ENCODE measurements at regions of chr16 and their contacts with region 1.

Region 1: GRCh38 chr16:86931399-86931941 is 353.1 kb downstream of the FOXL1 start:
- DNase-seq: peak; percentile 98
- H3K4me3 ChIP-seq: no peak overlapping the region
- H3K27ac ChIP-seq: peak overlapping the region; percentile 91
- H3K4me1 ChIP-seq: peaks cover 49% of the 10 kb centered on the region
- H3K27me3 ChIP-seq: no peaks in the 10 kb centered on the region
- CTCF ChIP-seq: peak in 1 of 2 donors; percentile 32
- POLR2A ChIP-seq: peak; percentile 68

Region 2: DNA sequence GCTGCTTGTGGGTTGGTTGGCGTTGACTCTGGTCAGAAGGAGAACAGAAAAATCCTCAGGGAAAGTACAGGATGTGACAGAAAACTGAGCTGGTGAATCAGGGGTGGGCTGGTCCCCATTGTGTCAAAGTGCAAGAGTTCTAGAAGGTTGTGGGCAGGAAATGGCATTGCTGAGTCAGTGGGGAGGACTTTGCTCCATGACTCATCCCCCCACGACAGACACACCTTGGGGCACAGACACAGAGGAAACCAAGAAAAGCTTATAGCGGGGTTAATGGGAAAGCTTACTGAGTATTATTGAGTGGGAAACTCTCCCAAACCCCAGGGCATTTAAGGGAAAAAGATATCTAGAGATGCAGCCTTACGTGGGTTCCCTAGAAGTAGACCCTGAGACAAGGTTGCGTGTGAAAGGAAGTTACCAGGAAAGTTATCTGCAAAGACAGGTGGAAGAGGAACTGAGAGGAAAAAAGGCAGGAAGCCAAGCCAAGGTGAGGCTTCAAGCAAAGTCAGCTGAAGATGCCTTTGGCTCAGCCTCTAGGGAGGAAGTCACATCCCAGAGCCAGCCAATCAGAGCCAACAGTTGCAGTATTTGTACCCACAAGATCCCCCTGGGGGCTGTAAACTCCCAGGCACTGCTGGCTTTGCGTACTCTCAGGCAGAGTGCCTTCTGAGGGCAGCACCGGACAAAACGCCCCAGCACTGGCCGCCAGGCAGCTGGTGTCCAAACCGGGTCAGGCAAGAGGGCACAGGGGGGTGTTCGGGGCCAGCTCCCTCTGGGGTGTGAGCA is 266.7 kb before region 1 on chr16:
- CTCF ChIA-PET with region 1: no interaction called
- POLR2A ChIA-PET with region 1: interaction called, 3 read pairs
- dilution Hi-C with region 1: no loop called
- intact Hi-C with region 1: loop called (anchors 1 kb)
- DNase-seq: peak; percentile 94
- H3K4me3 ChIP-seq: no peak overlapping the region
- H3K27ac ChIP-seq: peak overlapping the region; percentile 95
- H3K4me1 ChIP-seq: peaks cover 60% of the 10 kb centered on the region
- H3K27me3 ChIP-seq: no peaks in the 10 kb centered on the region
- CTCF ChIP-seq: no peak
- POLR2A ChIP-seq: no peak

Region 3: DNA sequence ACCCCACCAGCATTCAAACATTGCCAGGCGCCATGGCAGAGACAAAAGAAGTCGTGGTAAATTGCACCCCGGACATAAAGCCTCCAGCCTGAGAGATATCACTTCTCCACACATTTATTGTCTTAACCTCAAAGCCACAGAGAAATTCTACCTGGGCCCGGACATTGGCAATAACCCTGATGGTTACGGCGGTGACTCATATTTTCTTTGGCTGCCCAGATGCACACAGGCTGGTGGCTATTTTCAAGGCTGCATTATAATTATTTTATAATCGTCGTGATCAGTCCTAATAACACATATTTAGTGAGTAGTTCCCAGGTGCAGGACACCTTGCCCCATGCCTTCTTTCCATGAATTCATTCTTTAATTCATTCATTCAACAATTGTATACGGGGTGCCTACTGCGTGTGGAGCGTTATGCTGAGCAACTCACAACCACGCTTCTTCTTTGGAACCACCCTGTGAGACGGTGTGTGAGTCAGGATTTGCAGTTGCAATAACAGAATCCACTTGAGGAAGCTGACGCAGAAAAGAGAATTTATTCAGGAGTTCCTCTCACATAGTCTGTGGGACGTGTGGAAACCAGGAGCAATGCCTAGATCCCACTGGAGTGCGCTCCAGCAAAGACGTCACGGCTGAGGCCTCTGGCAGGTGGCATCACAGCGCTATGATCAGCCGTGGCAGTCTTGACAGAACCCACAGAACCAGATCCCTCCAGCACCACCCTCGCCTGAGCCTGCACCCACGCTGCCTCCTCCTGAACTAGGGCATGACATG is 107.4 kb before region 1 on chr16:
- CTCF ChIA-PET with region 1: interaction called, 3 read pairs
- POLR2A ChIA-PET with region 1: no interaction called
- dilution Hi-C with region 1: no loop called
- intact Hi-C with region 1: loop called (anchors 1 kb)
- DNase-seq: peak; percentile 87
- H3K4me3 ChIP-seq: peak overlapping the region in 1 of 3 experiments; percentile 7
- H3K27ac ChIP-seq: peak overlapping the region; percentile 93
- H3K4me1 ChIP-seq: peaks cover 50% of the 10 kb centered on the region
- H3K27me3 ChIP-seq: no peaks in the 10 kb centered on the region
- CTCF ChIP-seq: no peak
- POLR2A ChIP-seq: peak; percentile 50

Region 4: DNA sequence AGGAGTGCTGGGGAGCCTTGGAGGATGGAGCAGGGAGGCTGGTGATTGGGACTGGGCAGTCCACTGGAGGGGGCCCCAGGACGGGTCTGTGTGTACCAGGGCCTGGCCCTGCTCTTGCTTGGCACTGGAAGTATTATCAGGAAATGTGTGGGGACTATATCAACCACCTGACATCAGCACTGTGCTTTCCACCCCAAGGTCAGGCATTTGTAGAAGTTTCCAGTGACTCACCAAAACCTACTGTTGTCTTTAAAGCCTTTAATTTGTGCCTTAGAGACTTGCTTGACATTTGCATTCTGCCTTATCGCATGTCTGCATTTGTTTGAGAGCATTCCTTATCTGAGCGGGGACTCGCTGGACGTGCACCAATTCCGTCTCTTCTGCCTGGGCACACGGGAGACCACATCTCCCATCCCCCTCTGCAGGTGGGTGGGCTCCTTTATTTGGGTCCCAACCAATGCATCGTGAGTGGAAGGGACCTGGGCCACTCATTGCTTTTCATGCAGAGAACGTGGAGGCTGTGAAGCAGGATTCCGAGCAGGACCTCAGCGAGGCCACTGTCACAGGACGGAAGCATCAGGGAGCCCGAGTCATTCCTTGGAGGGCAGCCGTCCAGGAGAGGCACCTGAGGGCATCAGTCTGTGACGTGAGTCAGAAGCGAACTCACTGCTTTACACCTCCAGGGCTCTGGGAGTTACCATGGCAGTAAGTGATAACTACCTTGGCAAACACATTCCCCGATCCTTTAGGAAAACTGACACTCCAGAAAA is 29.8 kb before region 1 on chr16:
- CTCF ChIA-PET with region 1: no interaction called
- POLR2A ChIA-PET with region 1: no interaction called
- dilution Hi-C with region 1: no loop called
- intact Hi-C with region 1: loop called (anchors 1 kb)
- DNase-seq: peak; percentile 94
- H3K4me3 ChIP-seq: no peak overlapping the region
- H3K27ac ChIP-seq: peak overlapping the region; percentile 53
- H3K4me1 ChIP-seq: peaks cover 24% of the 10 kb centered on the region
- H3K27me3 ChIP-seq: no peaks in the 10 kb centered on the region
- CTCF ChIP-seq: peak in 1 of 2 donors; percentile 49
- POLR2A ChIP-seq: no peak

Region 5: DNA sequence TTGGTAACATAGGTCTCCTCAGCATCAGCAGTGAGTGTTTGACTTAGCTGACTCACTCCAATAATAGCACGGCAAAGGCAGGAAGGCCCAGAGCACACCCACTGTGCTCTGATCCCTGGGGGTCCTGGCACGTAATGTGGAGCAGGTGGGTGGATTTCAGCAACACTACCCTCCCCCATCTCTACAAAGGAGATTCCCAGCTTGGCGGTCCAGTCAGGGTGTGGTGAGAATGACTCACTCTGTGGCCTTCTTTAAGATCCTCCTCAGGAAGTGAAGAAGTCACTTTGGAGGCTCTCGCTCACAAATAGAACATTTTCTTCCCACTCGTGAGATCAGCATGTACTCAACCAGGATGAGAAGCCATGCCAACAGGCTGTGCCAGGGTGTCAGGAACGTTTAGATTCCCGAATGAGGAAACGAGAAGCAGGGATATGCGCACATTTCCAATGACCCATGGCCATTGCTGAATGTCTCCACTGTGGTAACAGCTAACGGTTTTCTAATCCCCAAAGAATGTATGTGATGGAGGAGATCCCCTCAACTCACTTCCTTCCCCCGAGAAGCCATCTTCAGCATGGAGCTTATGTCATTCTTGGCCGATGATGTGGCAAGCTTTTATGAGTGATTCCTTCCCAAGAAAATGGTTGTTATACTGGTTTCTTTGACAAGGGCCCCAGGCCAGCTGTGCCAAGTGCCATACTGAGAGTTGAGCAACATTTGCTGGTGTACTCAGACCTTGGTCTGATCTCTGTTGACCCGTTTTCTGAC is 20.5 kb after region 1 on chr16:
- CTCF ChIA-PET with region 1: interaction called, 6 read pairs
- POLR2A ChIA-PET with region 1: interaction called, 5 read pairs
- dilution Hi-C with region 1: no loop called
- intact Hi-C with region 1: loop called (anchors 1 kb)
- DNase-seq: peak; percentile 68
- H3K4me3 ChIP-seq: no peak overlapping the region
- H3K27ac ChIP-seq: peak overlapping the region; percentile 87
- H3K4me1 ChIP-seq: peaks cover 26% of the 10 kb centered on the region
- H3K27me3 ChIP-seq: no peaks in the 10 kb centered on the region
- CTCF ChIP-seq: no peak
- POLR2A ChIP-seq: no peak

Region 6: GRCh38 chr16:87053016-87053982 is 121.8 kb after region 1 on chr16:
- CTCF ChIA-PET with region 1: no interaction called
- POLR2A ChIA-PET with region 1: no interaction called
- dilution Hi-C with region 1: no loop called
- intact Hi-C with region 1: loop called (anchors 1 kb)
- DNase-seq: peak; percentile 89
- H3K4me3 ChIP-seq: peak overlapping the region in 1 of 3 experiments; percentile 8
- H3K27ac ChIP-seq: peak overlapping the region; percentile 25
- H3K4me1 ChIP-seq: peaks cover 16% of the 10 kb centered on the region
- H3K27me3 ChIP-seq: peaks cover 0 to 2% of the 10 kb centered on the region in 2 experiments
- CTCF ChIP-seq: peak; percentile 29 to 70
- POLR2A ChIP-seq: no peak

Region 7: GRCh38 chr16:87240220-87241107 is 309.0 kb after region 1 on chr16:
- CTCF ChIA-PET with region 1: no interaction called
- POLR2A ChIA-PET with region 1: no interaction called
- dilution Hi-C with region 1: no loop called
- intact Hi-C with region 1: no loop called
- DNase-seq: no peak
- H3K4me3 ChIP-seq: no peak overlapping the region
- H3K27ac ChIP-seq: no peak overlapping the region
- H3K4me1 ChIP-seq: peaks cover 3% of the 10 kb centered on the region
- H3K27me3 ChIP-seq: peaks cover 3 to 15% of the 10 kb centered on the region in 2 experiments
- CTCF ChIP-seq: no peak
- POLR2A ChIP-seq: no peak

Region 8: DNA sequence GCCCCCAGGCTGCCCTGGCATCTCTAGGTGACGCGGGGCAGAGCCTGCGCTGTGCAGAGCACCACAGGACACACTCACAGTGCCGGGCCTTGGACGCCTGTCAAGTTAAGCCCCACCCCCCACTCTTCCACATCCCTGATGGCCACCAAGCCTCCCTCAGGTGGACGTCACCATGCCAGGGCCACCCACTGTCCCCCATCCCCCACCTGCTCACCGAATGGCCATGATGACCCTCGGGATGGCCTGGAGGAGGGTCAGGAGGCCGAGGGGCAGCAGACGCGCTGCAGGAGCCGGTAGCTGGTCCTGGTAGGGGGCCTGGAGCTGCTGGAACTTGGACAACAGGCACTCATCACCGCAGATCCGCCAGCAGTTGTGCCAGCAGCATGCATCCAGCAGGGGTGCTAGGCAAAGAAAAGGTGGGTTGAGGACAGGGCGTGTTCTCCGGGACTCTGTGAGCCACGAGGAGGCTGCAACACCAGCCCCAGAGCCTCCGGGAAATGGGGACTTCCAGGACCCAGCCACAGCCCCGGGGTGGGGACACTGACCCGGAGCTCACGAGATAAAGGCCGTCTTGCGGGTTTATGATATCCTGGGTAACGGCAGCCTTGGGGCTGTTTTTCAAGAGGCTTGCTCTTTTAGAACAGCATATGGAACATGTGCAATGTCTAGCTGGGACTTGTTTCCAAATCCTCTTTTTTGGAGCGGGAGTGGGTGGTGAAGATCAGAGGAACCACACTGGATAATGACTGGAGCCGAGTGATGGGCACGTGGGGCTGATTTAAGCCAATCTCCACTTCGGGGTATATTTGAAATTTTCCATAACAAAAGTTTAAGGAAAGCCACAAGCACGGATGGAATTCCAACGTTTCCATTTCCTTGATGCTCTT is 374.3 kb after region 1 on chr16:
- CTCF ChIA-PET with region 1: no interaction called
- POLR2A ChIA-PET with region 1: no interaction called
- dilution Hi-C with region 1: no loop called
- intact Hi-C with region 1: no loop called
- DNase-seq: no peak
- H3K4me3 ChIP-seq: no peak overlapping the region
- H3K27ac ChIP-seq: no peak overlapping the region
- H3K4me1 ChIP-seq: no peaks in the 10 kb centered on the region
- H3K27me3 ChIP-seq: no peaks in the 10 kb centered on the region
- CTCF ChIP-seq: peak in 1 of 2 donors; percentile 11
- POLR2A ChIP-seq: no peak

Region 9: GRCh38 chr16:87702325-87702811 is 770.9 kb after region 1 on chr16:
- CTCF ChIA-PET with region 1: no interaction called
- POLR2A ChIA-PET with region 1: no interaction called
- dilution Hi-C with region 1: no loop called
- intact Hi-C with region 1: no loop called
- DNase-seq: peak; percentile 84
- H3K4me3 ChIP-seq: no peak overlapping the region
- H3K27ac ChIP-seq: peak overlapping the region; percentile 3
- H3K4me1 ChIP-seq: peaks cover 24% of the 10 kb centered on the region
- H3K27me3 ChIP-seq: no peaks in the 10 kb centered on the region
- CTCF ChIP-seq: peak; percentile 73 to 84
- POLR2A ChIP-seq: no peak

Measured in endothelial cell of umbilical vein (primary cell).